ENCODE measurements at regions of chr6 and their contacts with region 1.

Region 1: GRCh38 chr6:113306552-113307145 is 550.5 kb upstream of the MARCKS start:
- H3K4me3 ChIP-seq: no peak overlapping the region
- H3K27ac ChIP-seq: no peak overlapping the region
- H3K4me1 ChIP-seq: no peaks in the 10 kb centered on the region
- CTCF ChIP-seq: no peak

Region 2: DNA sequence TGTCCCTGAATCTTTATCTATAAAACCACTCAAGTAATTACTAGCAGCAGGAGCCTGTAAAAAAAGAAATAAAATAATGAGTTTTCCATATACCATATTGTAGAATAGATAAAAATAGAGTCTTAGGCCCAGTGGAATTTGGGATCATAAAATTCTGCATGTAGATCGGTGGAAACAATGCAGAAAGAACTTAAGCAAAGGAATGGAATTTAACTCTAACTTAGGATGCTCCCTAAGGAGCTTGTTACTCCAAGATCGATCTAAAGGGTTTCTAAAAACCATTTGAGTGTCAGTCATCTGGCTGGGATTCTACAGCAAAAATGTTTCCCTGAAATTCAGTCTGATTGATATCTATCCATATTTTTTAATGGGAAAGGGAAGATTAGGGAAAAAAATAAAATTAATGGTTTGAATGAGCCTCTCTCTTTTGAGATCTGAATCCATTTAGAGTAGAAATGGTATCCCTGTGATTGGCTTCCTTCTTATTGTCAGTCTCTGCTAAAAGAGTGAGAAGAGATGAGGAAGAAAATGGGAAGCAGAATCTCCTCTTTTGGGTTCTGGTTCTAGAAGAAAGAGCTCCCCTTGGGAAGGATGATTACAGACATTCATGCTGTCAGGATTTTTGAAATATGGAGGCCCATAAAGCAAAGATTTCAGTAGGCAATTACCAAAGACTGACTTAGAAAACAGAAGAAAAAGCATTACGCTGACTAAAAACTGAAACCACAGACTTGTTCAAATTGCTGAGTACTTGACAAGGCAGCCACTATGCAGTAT is 13.8 kb before region 1 on chr6:
- CTCF ChIA-PET with region 1: interaction called, 14 read pairs
- POLR2A ChIA-PET with region 1: no interaction called
- H3K4me3 ChIP-seq: no peak overlapping the region
- H3K27ac ChIP-seq: no peak overlapping the region
- H3K4me1 ChIP-seq: no peaks in the 10 kb centered on the region
- CTCF ChIP-seq: no peak

Region 3: DNA sequence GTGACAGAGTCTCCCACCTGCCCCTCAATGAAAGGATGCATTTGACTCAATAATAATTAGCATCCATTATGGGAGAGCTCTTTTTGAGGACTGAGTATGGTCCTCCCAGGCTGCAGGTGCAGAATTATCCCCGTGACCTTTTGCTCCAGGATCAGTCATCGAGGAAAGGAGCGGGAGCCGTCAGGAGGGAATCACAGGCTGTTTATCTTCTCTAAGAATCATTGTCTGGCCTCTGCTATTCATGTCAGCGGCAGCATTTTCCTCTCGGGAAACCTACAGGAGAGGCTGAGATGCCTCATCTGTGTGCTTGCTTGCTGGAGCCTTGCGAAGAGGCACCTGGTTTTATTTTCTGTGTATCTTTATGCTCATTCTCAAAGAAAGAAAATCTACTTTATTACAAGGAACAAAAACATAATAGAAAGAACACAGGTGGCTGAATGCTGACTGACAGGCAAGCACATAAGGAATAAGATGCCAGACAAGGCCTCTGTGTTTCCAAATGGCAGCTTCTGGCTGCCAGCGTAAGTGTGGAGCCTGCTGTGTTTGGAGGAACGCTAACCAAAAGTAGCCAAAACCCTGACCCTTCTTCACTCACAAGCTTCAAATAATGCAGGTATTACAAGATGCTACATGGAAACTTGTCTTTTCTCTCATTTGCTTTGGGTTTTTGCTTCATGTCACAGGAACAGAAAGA is 11.4 kb after region 1 on chr6:
- CTCF ChIA-PET with region 1: interaction called, 32 read pairs
- POLR2A ChIA-PET with region 1: no interaction called
- H3K4me3 ChIP-seq: no peak overlapping the region
- H3K27ac ChIP-seq: no peak overlapping the region
- H3K4me1 ChIP-seq: no peaks in the 10 kb centered on the region
- CTCF ChIP-seq: no peak

Region 4: DNA sequence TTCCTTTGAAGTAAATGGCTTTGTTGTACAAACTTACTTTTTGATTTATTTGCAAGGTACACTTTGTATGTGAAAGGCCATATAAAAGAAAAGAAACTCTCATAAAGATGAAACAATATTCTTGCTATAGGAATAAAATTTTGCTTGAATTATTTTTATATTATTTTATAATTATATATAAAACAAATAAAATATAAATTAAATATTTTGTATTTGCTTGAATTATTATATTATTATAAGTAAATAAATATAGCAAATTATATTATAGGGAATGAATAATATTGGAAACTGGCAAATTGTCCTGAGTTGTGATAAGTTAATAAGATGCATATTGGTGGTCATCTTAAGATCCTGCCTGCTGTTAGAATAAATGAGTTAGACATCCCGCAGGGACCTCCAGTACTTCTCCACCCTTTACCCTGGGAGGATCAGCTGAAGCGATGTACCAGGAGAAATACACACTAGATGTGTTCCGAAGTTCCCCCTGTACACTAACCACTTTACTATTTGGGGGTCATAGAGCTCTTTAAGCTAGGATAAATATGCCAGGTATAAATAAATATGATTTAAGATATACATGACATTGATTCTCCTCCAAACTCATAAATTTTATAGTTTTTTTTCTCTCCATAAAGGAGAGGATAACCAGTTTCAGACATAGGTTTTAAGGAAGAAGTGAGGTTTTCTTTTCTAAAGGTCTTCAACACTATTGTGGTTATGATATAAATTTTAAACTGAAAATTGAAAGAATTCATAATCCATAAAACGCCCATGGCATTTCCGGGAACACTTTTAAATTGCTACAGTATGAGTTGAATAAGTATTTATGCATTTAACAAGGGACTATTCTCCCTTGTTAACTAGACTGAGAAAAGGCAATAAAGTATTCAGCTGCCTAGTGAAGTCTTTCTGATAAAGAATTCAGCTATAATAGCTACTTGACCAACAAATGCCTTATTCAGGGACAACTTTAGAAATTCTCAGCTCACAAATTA is 64.2 kb after region 1 on chr6:
- CTCF ChIA-PET with region 1: interaction called, 10 read pairs
- POLR2A ChIA-PET with region 1: no interaction called
- H3K4me3 ChIP-seq: no peak overlapping the region
- H3K27ac ChIP-seq: no peak overlapping the region
- H3K4me1 ChIP-seq: no peaks in the 10 kb centered on the region
- CTCF ChIP-seq: no peak

Region 5: GRCh38 chr6:113447088-113447831 is 140.6 kb after region 1 on chr6:
- CTCF ChIA-PET with region 1: no interaction called
- POLR2A ChIA-PET with region 1: no interaction called
- H3K4me3 ChIP-seq: no peak overlapping the region
- H3K27ac ChIP-seq: no peak overlapping the region
- H3K4me1 ChIP-seq: no peaks in the 10 kb centered on the region
- CTCF ChIP-seq: no peak